Naive thymus-derived CD4-positive, alpha-beta T cell (primary cell): ENCODE measurements at regions of chr2 and their contacts with region 1.

Region 1: DNA sequence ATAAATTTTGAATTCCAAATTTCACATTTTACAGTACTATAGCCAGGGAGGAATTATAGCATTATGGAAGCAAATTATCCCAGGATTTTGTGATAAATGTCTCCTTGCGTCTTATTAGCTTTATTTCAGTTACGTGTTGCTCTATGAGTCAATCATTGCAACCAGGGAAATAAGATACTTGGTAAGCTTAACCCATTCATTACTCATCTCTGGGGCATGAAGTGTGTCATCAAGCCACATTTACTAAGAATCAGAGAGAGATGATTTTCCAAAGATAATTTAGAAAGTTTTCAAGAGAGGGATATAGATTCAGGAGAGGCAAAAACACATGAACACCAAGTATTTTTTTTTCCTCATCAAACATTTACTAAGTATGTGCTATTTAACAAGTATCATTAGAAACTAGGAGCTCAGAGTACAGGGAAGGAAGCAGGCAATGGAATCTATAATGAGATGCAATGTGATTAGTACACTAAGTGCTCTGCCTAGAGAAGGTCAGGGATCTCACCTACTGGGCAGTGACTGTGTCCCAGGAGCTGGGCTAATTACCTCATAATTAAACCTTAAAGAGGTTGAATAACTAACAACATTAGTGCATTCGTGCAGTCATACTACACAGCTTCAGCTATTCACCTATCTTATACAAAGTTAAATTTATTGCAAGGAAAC is 217.8 kb upstream of the NXPH2 start:
- DNase-seq: no peak
- ATAC-seq: no peak
- H3K4me3 ChIP-seq: no peak overlapping the region
- H3K4me3 Mint-ChIP-seq: no peak overlapping the region
- H3K27ac ChIP-seq: no peak overlapping the region
- H3K27ac Mint-ChIP-seq: no peak overlapping the region
- H3K4me1 ChIP-seq: no peaks in the 10 kb centered on the region
- H3K4me1 Mint-ChIP-seq: no peaks in the 10 kb centered on the region
- H3K27me3 ChIP-seq: no peaks in the 10 kb centered on the region
- H3K27me3 Mint-ChIP-seq: no peaks in the 10 kb centered on the region

Region 2: GRCh38 chr2:138974651-138975050 is 23.3 kb before region 1 on chr2:
- CTCF ChIA-PET with region 1: no interaction called
- POLR2A ChIA-PET with region 1: no interaction called
- intact Hi-C with region 1: loop called in 1 of 2 experiments (anchors 1 kb)
- DNase-seq: no peak
- ATAC-seq: no peak
- H3K4me3 ChIP-seq: no peak overlapping the region
- H3K4me3 Mint-ChIP-seq: no peak overlapping the region
- H3K27ac ChIP-seq: no peak overlapping the region
- H3K27ac Mint-ChIP-seq: no peak overlapping the region
- H3K4me1 ChIP-seq: no peaks in the 10 kb centered on the region
- H3K4me1 Mint-ChIP-seq: no peaks in the 10 kb centered on the region
- H3K27me3 ChIP-seq: no peaks in the 10 kb centered on the region
- H3K27me3 Mint-ChIP-seq: no peaks in the 10 kb centered on the region